ENCODE measurements at regions of chr1 and their contacts with region 1.

Region 1: GRCh38 chr1:205273551-205273982 is 45.8 kb downstream of the TMCC2 start:
- DNase-seq: peak; percentile 75 to 90 (median 80)
- ATAC-seq: peak; percentile 70 to 87 (median 78)
- H3K4me3 ChIP-seq: no peak overlapping the region
- H3K27ac ChIP-seq: no peak overlapping the region
- H3K4me1 ChIP-seq: peaks cover 0 to 33% (median 11%) of the 10 kb centered on the region in 12 donors
- H3K27me3 ChIP-seq: no peaks in the 10 kb centered on the region
- CTCF ChIP-seq: peak; percentile 93 to 99 (median 99)
- POLR2A ChIP-seq: no peak

Region 2: DNA sequence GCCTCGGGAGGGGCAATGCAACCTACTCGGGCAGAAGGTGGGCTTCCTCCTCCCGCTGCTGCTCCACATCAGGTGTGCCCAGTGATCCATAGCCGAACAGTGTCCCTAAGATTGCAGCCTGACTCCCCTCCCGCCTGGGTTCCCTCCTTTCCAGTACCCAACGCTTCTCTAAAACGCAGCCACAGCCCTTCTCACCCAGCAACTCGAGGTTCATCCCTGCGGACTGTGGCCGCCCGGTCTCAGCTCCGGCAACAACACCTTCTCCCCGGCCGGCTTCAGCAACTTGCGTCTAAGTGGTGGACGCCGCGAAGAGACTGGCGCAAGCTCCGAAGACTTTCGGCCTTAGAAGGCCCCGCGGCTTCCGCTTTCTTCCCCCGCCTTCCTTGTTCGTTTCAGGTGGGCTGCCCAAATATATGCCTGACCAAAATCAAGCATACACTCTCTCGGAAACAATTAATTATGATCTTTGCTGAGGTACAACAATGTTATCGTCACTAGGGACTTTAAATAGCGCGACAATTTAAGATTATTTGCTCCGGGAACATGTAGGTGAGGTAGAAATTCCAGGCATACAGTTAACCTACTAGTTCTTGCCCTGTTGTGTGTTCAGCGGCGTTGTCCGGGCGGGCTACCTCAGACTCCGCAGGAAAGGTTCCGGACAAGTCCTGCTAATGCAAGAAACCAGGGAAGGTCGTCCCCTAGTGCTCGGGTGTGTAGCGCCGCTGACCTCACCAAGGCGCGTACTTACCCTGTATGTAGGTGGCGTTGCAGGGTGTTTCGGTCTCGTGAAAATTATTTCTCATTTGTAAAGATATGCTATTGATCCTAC is 151.7 kb before region 1 on chr1 and contains the start of gene RBBP5:
- intact Hi-C with region 1: no loop called
- DNase-seq: peak; percentile 95 to 97 (median 96)
- ATAC-seq: peak; percentile 99
- H3K4me3 ChIP-seq: peak within 1 kb of the TSS; percentile 68 to 96 (median 81)
- H3K27ac ChIP-seq: peak within 1 kb of the TSS; percentile 89 to 98 (median 94)
- H3K4me1 ChIP-seq: peaks cover 7 to 31% (median 26%) of the 10 kb centered on the region in 12 donors
- H3K27me3 ChIP-seq: no peaks in the 10 kb centered on the region
- CTCF ChIP-seq: peak; percentile 41 to 90 (median 61)
- POLR2A ChIP-seq: peak in 1 of 2 donors; percentile 48
- total RNA-seq, gene RBBP5: 8.4 to 12.1 (median 10.1) TPM

Region 3: DNA sequence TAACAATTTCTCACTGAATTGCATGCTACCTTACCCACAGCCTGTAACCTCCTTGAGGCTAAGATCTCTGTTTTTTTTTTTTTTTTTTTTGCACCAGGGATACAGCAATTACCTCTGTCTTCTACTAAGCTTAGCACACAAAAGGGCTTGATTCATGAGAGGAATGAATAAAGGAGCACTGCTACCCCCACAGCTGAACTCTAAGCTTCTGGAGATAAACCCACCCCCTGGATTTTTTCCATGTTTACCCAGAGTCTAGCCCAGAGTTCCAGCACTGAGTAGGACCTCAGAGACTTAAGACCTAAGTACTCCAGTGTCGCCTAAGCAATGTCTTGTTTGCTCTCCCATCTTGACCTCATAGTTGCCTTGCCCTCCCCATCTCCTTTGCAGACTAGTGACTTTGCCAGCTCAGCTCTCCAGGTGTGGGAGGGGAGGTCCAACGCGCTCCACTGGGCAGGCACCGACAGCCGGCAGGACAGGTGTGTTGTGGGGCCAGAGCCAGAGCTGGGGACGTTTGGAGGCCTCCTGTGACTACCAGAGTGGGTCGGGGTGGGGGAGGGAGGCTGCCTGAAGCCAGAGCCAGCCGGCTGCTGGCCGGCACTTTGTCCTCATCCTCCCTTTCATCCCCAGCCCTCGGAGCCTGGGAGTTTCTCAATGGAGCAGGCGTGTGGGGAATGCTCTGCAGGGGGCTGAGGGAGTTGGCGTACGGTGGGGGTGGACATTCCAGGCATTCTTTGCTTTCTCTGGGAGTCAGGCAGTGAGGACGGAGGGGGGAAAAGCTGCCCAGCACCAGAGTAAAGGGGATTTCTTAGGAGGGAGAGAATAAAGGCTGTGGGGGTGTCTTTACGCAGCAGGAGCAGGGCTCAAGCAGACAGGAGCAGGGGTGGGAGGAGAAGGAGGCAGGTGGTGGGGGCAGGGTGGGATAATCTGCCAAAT is 27.6 kb after region 1 on chr1:
- intact Hi-C with region 1: no loop called
- DNase-seq: peak in 1 of 5 donors; percentile 14
- ATAC-seq: peak; percentile 36 to 59 (median 38)
- H3K4me3 ChIP-seq: no peak overlapping the region
- H3K27ac ChIP-seq: no peak overlapping the region
- H3K4me1 ChIP-seq: peaks cover 0 to 8% (median 0%) of the 10 kb centered on the region in 12 donors
- H3K27me3 ChIP-seq: no peaks in the 10 kb centered on the region
- CTCF ChIP-seq: no peak
- POLR2A ChIP-seq: no peak

Region 4: GRCh38 chr1:205325334-205325884 is 51.8 kb after region 1 on chr1:
- intact Hi-C with region 1: loop called (anchors 1 to 2 kb)
- DNase-seq: peak in 3 of 5 donors; percentile 39 to 64 (median 62)
- ATAC-seq: peak in 2 of 4 donors; percentile 26 to 31
- H3K4me3 ChIP-seq: no peak overlapping the region
- H3K27ac ChIP-seq: no peak overlapping the region
- H3K4me1 ChIP-seq: peaks cover 3 to 21% (median 9%) of the 10 kb centered on the region in 12 donors
- H3K27me3 ChIP-seq: peaks cover 0 to 20% (median 0%) of the 10 kb centered on the region in 9 donors
- CTCF ChIP-seq: peak; percentile 68 to 91 (median 81)
- POLR2A ChIP-seq: no peak

Measured in heart left ventricle (tissue), 16 donors.